ENCODE measurements at regions of chr20 and their contacts with region 1.

Region 1: DNA sequence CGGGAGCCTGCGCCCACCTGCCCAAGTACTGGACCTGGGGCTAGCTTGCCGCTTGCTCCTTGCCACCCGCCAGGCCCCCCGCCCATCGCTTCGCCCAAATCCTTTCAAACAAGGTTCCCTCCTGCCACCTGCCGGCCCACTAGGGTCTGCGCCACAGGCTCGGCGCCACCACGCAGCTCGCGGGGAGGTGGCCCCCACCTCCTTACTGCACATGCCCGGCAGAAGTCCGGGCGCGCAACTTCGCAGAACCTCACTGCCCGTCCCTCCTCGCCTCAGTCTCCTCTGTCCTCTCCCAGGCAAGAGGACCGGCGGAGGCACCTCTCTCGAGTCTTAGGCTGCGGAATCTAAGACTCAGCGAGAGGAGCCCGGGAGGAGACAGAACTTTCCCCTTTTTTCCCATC is 11.2 kb downstream of the GNAS-AS1 start:
- DNase-seq: no peak
- ATAC-seq: peak; percentile 53
- H3K4me3 Mint-ChIP-seq: no peak overlapping the region
- H3K27ac Mint-ChIP-seq: no peak overlapping the region
- H3K4me1 Mint-ChIP-seq: peaks cover 40% of the 10 kb centered on the region
- H3K27me3 Mint-ChIP-seq: peaks cover 96% of the 10 kb centered on the region

Region 2: DNA sequence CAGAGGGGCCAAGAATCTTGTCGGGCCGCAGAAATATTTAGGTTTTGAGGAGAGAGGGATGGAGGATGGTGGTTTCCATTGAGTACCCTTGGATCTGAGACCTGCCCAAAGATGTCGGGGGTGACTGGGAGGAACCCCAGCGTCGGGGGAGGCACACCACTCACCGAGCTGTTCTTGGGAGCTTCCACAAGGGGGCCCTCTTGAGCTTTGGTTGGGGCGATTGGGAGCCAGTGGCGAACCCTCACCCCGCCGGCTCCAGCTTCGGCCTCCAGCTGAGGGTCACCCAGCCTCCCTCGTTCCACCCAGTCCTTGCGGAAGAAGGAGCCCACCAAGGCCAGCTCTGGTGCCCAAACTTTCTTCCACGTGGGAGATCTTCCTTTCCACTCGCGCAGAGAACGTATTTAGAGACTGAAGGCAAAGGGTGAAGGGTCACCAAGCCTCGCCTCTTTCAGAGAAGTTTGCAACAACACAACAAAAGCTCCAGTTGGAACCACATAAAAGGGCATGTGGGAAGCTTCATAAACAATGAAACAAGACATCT is 357.9 kb before region 1 on chr20:
- CTCF ChIA-PET with region 1: interaction called, 13 read pairs
- DNase-seq: peak; percentile 45
- ATAC-seq: no peak
- H3K4me3 Mint-ChIP-seq: no peak overlapping the region
- H3K27ac Mint-ChIP-seq: no peak overlapping the region
- H3K4me1 Mint-ChIP-seq: no peaks in the 10 kb centered on the region
- H3K27me3 Mint-ChIP-seq: peaks cover 11% of the 10 kb centered on the region

Region 3: DNA sequence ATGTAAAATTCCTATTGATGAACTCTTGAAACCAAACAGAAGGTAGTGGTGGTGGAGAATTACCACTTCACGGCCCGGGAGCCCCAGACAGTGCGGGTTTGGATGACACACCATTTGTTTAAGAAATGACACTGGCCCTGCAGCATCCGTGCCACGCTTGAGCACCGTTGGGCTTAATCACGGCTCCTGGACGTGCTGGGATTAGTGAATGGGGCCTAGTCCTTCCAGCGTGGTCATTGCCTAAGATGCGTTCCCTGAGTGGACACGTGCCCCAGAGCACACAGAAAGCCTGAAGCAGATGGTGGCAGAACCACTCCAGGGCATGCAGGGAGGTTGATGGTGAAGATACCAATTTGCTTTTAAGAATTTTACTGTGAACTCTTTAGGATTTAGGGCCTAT is 173.9 kb before region 1 on chr20:
- CTCF ChIA-PET with region 1: no interaction called
- DNase-seq: no peak
- ATAC-seq: no peak
- H3K4me3 Mint-ChIP-seq: no peak overlapping the region
- H3K27ac Mint-ChIP-seq: no peak overlapping the region
- H3K4me1 Mint-ChIP-seq: peaks cover 37% of the 10 kb centered on the region
- H3K27me3 Mint-ChIP-seq: no peaks in the 10 kb centered on the region

Region 4: DNA sequence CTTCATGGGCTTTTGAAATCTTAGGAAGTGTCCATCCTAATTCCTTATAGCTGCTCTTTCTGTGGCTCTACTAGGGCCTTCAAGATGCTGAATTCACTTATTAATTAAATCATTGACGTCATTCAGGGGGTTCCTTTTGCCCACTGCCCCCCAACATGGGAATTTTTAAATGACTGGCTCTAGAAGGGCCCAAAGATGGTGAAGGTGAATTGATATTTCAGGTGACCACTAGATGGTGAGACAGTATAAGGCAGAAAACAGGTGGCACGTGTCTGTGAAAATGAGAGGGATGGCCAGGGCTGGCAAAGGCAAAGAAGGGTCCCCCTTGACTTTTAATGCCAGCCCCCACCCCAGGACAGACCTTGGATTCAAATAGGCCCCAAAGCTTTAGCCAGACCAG is 24.9 kb after region 1 on chr20:
- CTCF ChIA-PET with region 1: no interaction called
- DNase-seq: no peak
- ATAC-seq: peak; percentile 20
- H3K4me3 Mint-ChIP-seq: no peak overlapping the region
- H3K27ac Mint-ChIP-seq: no peak overlapping the region
- H3K4me1 Mint-ChIP-seq: no peaks in the 10 kb centered on the region
- H3K27me3 Mint-ChIP-seq: peaks cover 50% of the 10 kb centered on the region